Sigmoid colon (tissue), 7 donors: ENCODE measurements at regions of chr6 and their contacts with region 1.

Region 1: GRCh38 chr6:116279260-116280063 is at the start of gene TSPYL1:
- DNase-seq: peak; percentile 98
- H3K4me3 ChIP-seq: peak within 1 kb of the TSS; percentile 87 to 94 (median 92)
- H3K27ac ChIP-seq: peak within 1 kb of the TSS; percentile 98 to 100 (median 99)
- H3K4me1 ChIP-seq: peaks cover 0 to 55% (median 49%) of the 10 kb centered on the region in 4 donors
- H3K27me3 ChIP-seq: no peaks in the 10 kb centered on the region
- CTCF ChIP-seq: no peak
- EP300 ChIP-seq: no peak
- POLR2A ChIP-seq: peak; percentile 98
- total RNA-seq, gene TSPYL1: 52.8 to 79.6 (median 65.8) TPM

Region 2: DNA sequence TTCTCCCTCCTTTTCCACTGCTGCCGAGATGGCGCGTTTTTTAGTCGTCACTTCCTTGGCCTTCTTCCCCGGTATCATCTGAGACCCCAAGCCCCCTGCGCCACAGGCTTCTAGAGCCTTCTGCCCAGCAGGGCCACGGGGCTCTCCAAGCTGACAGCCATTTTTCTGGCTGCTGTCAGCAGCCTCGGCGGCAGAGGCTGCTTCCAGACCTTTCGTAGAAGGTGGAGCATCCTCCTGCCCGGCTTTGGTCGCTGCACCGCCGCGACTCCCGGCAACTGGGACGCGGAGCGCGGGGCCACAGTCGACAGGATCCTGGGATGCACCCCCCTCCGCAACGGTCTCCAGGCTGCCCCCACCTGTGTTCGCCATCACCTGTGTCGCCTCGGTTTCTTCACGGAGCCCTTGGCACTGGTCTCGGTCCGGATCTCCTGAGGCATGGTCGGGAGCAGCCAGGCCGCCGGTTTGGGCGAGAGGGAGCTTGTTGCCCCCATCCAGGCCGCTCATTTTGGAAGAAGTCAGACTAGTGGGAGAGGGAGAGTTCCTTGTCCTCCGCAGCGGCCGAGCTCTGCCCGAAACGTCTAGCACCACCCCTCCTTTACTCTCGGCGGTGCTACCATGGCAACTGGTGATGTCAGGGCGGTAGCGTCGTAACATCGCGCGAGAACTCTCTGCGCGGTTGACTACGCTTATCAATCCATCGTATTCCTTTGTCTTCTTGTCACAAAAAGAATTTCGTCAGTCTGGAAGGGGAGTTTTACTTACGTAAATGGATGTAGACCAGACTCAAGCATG is 25.8 kb before region 1 on chr6 and contains the start of gene TSPYL4:
- intact Hi-C with region 1: loop called (anchors 2 kb)
- DNase-seq: peak; percentile 97
- H3K4me3 ChIP-seq: peak within 1 kb of the TSS; percentile 63 to 99 (median 78)
- H3K27ac ChIP-seq: peak within 1 kb of the TSS; percentile 88 to 95 (median 90)
- H3K4me1 ChIP-seq: peaks cover 0 to 54% (median 38%) of the 10 kb centered on the region in 4 donors
- H3K27me3 ChIP-seq: no peaks in the 10 kb centered on the region
- CTCF ChIP-seq: no peak
- EP300 ChIP-seq: no peak
- POLR2A ChIP-seq: peak; percentile 75 to 79
- total RNA-seq, gene TSPYL4: 15.1 to 18.5 (median 15.5) TPM

Region 3: GRCh38 chr6:116371120-116371917 is 91.9 kb after region 1 on chr6:
- intact Hi-C with region 1: loop called (anchors 1 kb)
- DNase-seq: peak; percentile 92
- H3K4me3 ChIP-seq: peak overlapping the region; percentile 56 to 83 (median 76)
- H3K27ac ChIP-seq: peak overlapping the region; percentile 93 to 96 (median 95)
- H3K4me1 ChIP-seq: peaks cover 0 to 12% (median 6%) of the 10 kb centered on the region in 4 donors
- H3K27me3 ChIP-seq: no peaks in the 10 kb centered on the region
- CTCF ChIP-seq: no peak
- EP300 ChIP-seq: no peak
- POLR2A ChIP-seq: peak in 1 of 2 donors; percentile 39

Region 4: GRCh38 chr6:116511404-116512110 is 232.1 kb after region 1 on chr6 and contains the start of gene CALHM5:
- intact Hi-C with region 1: loop called (anchors 5 kb)
- DNase-seq: peak; percentile 72
- H3K4me3 ChIP-seq: peak within 1 kb of the TSS; percentile 21 to 51 (median 42)
- H3K27ac ChIP-seq: peak within 1 kb of the TSS; percentile 77 to 84 (median 82)
- H3K4me1 ChIP-seq: peaks cover 0 to 19% (median 7%) of the 10 kb centered on the region in 4 donors
- H3K27me3 ChIP-seq: no peaks in the 10 kb centered on the region
- CTCF ChIP-seq: peak in 3 of 4 experiments; percentile 50 to 66 (median 50)
- EP300 ChIP-seq: no peak
- POLR2A ChIP-seq: no peak
- total RNA-seq, gene CALHM5: 1.5 to 2.5 (median 1.9) TPM